ENCODE measurements at regions of chr15 and their contacts with region 1.

Region 1: DNA sequence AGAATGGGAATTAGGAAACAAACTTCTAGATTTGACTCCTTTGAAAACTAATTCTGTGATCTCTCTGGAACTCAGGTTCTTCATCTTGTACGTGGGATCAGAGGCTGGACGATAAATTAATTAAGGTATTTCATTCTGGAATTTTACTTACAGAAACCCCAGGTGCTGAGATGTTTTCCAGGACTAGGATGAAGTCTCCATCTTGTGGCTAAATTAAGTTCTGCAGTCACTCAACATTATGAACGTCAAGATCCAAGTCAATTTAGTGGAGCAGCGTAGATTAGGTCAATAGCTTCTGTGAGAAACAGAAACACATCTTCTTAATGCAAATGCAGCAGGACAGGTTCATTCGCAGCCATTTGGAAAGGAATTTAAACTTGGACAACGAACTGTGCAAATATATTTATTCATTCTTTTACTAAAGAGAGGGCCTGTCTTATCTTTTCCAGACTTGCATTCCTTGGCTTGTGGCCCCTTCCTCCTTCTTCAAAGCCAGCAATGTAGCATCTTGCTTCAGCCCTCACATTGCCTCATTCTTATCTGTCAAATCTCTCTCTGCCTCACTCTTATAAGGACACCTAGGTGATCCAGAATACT is 26.7 kb upstream of the TMC3 start:
- DNase-seq: no peak
- H3K4me3 ChIP-seq: no peak overlapping the region
- H3K27ac ChIP-seq: no peak overlapping the region
- H3K4me1 ChIP-seq: peaks cover 2% of the 10 kb centered on the region
- H3K27me3 ChIP-seq: no peaks in the 10 kb centered on the region
- CTCF ChIP-seq: peak; percentile 81

Region 2: DNA sequence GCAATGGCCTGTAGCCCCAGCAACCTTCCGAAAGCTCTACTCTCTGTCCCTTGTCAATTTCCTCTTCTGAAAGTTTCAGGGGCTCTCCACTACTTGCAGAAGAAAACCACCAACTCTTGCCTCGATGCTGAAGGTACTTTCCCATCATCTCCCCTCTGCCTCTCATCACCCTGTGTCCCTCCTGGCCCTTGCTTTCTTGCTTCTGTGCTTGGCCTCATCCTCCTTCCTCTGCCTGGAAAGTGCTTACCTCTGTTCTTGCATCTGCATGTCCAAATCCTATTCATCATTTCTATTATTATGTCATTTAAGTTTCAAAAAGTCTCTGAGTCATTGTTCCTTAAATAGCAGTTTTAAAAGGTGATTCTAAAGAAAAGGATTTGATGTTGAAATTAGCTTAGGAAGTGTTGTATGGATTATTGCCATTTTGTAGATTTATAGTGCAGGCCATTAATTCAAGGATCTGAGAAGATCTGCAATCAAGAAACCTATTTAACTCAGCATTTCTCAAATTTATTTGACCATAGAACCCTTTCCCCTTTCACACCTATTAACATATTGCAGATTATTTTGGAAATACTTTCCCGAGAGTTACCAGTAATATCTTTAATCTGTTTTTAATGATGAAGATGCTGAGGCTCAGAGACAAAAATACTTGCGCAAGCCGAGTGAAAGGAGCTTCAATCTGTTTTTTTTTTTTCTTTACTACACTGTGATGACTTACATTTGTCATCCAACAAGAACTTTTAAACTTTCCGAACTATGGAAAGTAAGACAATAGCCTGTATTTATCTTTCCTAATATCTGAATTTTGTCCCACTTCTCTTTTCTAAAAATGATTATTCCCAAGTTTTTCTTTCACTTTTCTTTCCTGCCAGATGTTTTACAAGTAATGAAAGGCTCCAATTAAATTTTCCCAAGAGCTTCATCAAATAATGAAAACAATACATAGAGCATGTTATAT is 288.9 kb before region 1 on chr15:
- intact Hi-C with region 1: loop called (anchors 10 kb)
- DNase-seq: no peak
- H3K4me3 ChIP-seq: no peak overlapping the region
- H3K27ac ChIP-seq: no peak overlapping the region
- H3K4me1 ChIP-seq: no peaks in the 10 kb centered on the region
- H3K27me3 ChIP-seq: peaks cover 4% of the 10 kb centered on the region
- CTCF ChIP-seq: no peak

Region 3: DNA sequence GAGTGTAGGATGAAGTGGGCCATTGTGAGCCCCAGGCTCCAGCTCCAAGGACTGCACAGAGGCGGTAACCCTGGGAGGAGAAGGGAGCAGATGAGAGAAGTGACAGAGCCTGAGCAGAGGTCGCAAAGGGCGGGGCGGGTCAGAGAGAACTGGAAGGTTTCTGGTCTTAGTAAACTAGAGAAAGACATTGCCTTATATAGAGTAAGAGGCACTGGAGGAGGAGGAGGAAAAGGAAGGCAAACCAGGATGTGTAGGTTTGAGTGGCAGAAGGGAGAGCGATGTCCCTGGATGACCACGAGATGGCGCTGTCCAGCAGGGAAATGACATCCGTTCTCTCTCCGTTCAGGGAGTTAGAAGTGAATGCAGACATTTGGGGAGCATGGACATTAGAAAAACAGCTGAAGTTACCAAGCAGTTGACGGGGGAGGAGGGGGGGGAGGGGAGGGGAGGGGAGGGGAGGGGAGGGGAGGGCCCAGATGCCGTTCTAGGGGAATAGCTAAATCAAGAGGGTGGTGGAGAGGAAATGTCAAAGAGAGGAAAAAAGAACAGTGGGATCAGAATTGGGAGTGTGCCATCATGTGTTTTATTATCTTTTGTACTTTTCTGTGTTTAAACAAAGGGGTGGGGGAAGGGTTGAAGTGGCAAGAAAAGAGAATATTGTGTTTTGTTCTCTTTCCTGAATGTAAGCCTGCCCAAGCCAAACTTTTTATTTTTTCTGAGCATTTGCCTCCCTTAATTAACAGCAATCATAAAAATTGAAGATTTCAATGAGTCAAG is 125.6 kb before region 1 on chr15:
- intact Hi-C with region 1: loop called (anchors 2 kb)
- DNase-seq: peak; percentile 89
- H3K4me3 ChIP-seq: no peak overlapping the region
- H3K27ac ChIP-seq: peak overlapping the region; percentile 41
- H3K4me1 ChIP-seq: peaks cover 2% of the 10 kb centered on the region
- H3K27me3 ChIP-seq: no peaks in the 10 kb centered on the region
- CTCF ChIP-seq: peak; percentile 76

Region 4: DNA sequence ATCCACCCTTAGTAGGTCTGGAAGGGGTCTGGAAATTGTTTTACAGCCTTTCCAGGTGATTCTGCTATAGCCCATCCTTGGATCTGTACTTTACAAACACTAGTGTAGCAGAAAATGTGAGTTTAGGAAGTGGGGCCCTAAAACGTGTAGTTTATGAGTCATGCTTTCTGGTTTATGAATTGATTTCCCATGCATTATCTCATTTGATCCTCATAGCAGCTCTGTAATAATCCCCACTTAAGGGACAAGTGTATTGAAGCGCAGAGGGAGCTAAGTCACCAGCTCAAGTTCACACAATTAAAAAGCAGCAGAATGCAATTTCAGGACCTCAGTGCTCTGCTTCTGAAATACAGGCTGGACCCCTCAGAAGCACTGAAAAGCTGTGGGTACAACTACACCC is 54.1 kb before region 1 on chr15:
- intact Hi-C with region 1: loop called (anchors 10 kb)
- DNase-seq: no peak
- H3K4me3 ChIP-seq: no peak overlapping the region
- H3K27ac ChIP-seq: no peak overlapping the region
- H3K4me1 ChIP-seq: no peaks in the 10 kb centered on the region
- H3K27me3 ChIP-seq: no peaks in the 10 kb centered on the region
- CTCF ChIP-seq: no peak

Measured in colonic mucosa (tissue), 4 donors.